Naive thymus-derived CD4-positive, alpha-beta T cell (primary cell): ENCODE measurements at regions of chr2 and their contacts with region 1.

Region 1: DNA sequence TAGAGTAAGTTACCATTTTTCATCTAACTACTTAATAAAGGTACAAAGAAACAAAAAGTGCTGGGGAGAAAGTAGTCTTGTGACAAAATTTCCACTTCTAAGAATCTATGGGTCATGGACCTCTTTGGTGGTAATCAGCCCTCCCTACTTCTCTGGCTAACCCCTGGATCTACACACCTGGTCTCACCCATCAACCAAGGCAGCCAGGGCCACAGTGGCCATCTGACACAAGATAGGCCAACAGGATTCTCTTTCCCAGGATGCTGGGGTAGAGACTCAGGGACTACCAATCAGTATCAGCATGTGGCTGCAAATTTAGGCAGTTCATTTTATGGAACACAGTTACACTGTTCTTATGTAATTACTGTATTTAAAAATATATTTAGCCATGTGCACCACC is 17.8 kb downstream of the RNF149 start:
- DNase-seq: no peak
- ATAC-seq: no peak
- H3K4me3 ChIP-seq: no peak overlapping the region
- H3K4me3 Mint-ChIP-seq: no peak overlapping the region
- H3K27ac ChIP-seq: no peak overlapping the region
- H3K27ac Mint-ChIP-seq: peak overlapping the region in 2 of 9 donors; percentile 0 to 66
- H3K4me1 ChIP-seq: peaks cover 5 to 6% of the 10 kb centered on the region in 2 donors
- H3K4me1 Mint-ChIP-seq: peaks cover 7 to 57% (median 36%) of the 10 kb centered on the region in 7 donors
- H3K27me3 ChIP-seq: no peaks in the 10 kb centered on the region
- H3K27me3 Mint-ChIP-seq: no peaks in the 10 kb centered on the region

Region 2: DNA sequence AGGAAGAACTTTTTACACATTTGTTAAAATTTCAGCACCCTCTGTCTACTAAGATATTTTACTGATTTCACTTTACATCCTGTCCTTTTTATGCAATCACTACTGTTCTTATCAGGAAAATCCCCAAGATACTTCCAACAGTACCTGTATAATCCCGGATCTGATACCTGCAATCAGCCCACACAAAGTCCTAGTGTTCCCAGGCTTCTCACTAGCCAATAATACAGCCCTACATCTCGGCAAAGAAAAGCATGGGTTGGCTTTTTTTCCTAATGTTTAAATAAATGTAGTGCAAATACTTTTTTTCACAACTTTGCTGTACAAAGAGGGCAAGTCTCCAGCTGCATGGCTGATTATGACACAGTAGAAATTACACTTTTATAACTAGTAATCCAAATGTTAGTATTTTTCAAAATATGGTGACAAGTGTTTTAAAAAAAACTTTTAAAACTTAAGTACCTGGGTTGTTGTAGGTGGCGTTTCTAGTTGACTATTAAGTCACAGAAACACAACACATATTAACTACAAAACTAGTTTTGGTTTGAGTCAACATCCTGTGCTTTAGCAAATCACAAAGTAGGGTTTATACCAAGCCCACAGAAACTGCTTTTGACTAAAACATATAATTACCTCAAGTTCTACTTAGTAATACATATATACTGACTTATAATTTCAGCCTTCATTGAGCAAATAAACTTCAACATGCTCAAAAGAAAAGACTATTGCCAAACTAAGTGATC is 18.5 kb before region 1 on chr2:
- CTCF ChIA-PET with region 1: no interaction called
- POLR2A ChIA-PET with region 1: interaction called, 3 read pairs
- intact Hi-C with region 1: loop called in 1 of 2 experiments (anchors 2 kb)
- DNase-seq: no peak
- ATAC-seq: peak; percentile 29
- H3K4me3 ChIP-seq: no peak overlapping the region
- H3K4me3 Mint-ChIP-seq: peak overlapping the region in 1 of 10 donors; percentile 69
- H3K27ac ChIP-seq: peak overlapping the region; percentile 5
- H3K27ac Mint-ChIP-seq: peak overlapping the region; percentile 12 to 84 (median 69)
- H3K4me1 ChIP-seq: peaks cover 0 to 3% of the 10 kb centered on the region in 2 donors
- H3K4me1 Mint-ChIP-seq: peaks cover 17 to 49% (median 32%) of the 10 kb centered on the region in 7 donors
- H3K27me3 ChIP-seq: no peaks in the 10 kb centered on the region
- H3K27me3 Mint-ChIP-seq: no peaks in the 10 kb centered on the region